Activated CD4-positive, alpha-beta T cell treated with anti-CD3 and anti-CD28 coated beads for 36 hours (primary cell): ENCODE measurements at regions of chr2 and their contacts with region 1.

Region 1: DNA sequence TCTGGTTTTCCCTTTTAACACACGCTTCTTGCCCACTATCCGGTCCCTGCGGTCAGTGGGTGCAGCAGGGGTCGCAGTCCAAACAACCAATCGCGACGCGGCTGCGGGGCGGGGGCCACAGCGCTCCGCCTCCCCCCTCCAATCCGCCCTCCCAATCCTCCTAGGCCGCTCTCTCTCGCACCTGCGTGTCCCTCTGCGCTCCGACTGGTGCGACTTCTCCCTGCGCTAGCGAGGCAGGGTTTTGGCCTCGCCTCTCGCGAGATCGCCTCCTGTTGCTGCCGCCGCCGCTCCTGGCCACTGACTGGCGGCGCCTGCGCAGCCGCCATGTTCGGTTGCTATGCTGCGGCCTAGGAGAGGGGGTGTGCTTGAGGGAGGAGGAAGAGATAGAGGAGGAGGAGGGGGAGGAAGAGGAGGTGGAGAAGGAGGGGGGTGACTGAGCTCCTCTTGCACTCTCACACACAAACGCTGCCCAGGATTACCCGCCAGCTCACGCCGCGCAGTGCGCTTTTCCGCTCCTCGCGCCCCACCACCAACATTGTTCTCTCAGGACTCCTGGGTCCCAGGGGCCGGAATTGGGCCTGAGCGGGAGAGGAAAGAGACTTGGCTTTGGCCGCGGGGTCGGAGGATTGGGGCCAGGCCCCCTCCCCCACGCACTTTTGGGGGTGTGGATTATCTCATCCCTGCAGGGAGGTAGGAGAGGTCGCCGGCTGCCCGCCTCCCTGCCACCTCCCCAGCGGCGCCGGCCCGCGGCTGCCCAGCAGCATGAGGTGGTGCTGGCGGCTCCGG is at the start of gene PTPN4:
- DNase-seq: peak; percentile 98
- ATAC-seq: peak; percentile 93
- H3K4me3 Mint-ChIP-seq: peak within 1 kb of the TSS; percentile 72
- H3K27ac Mint-ChIP-seq: peak within 1 kb of the TSS; percentile 93
- H3K4me1 Mint-ChIP-seq: peaks cover 43% of the 10 kb centered on the region
- H3K27me3 Mint-ChIP-seq: no peaks in the 10 kb centered on the region
- total RNA-seq, gene PTPN4: 32.4 to 38.0 TPM

Region 2: GRCh38 chr2:119702918-119703401 is 56.7 kb before region 1 on chr2:
- CTCF ChIA-PET with region 1: interaction called, 10 read pairs
- POLR2A ChIA-PET with region 1: no interaction called
- intact Hi-C with region 1: loop called (anchors 1 to 5 kb)
- DNase-seq: peak; percentile 82
- ATAC-seq: peak; percentile 81
- H3K4me3 Mint-ChIP-seq: no peak overlapping the region
- H3K27ac Mint-ChIP-seq: no peak overlapping the region
- H3K4me1 Mint-ChIP-seq: peaks cover 21% of the 10 kb centered on the region
- H3K27me3 Mint-ChIP-seq: no peaks in the 10 kb centered on the region

Region 3: GRCh38 chr2:119730671-119731193 is 28.9 kb before region 1 on chr2:
- CTCF ChIA-PET with region 1: no interaction called
- POLR2A ChIA-PET with region 1: no interaction called
- intact Hi-C with region 1: no loop called
- DNase-seq: no peak
- ATAC-seq: no peak
- H3K4me3 Mint-ChIP-seq: no peak overlapping the region
- H3K27ac Mint-ChIP-seq: no peak overlapping the region
- H3K4me1 Mint-ChIP-seq: no peaks in the 10 kb centered on the region
- H3K27me3 Mint-ChIP-seq: no peaks in the 10 kb centered on the region

Region 4: GRCh38 chr2:119929537-119929936 is 169.9 kb after region 1 on chr2:
- CTCF ChIA-PET with region 1: no interaction called
- POLR2A ChIA-PET with region 1: no interaction called
- intact Hi-C with region 1: loop called (anchors 5 to 10 kb)
- DNase-seq: peak; percentile 10
- ATAC-seq: peak; percentile 79
- H3K4me3 Mint-ChIP-seq: peak overlapping the region; percentile 35
- H3K27ac Mint-ChIP-seq: peak overlapping the region; percentile 42
- H3K4me1 Mint-ChIP-seq: peaks cover 54% of the 10 kb centered on the region
- H3K27me3 Mint-ChIP-seq: no peaks in the 10 kb centered on the region

Region 5: GRCh38 chr2:120223034-120223912 is 463.6 kb after region 1 on chr2 and contains the start of gene TMEM185B:
- CTCF ChIA-PET with region 1: no interaction called
- POLR2A ChIA-PET with region 1: interaction called, 5 read pairs
- intact Hi-C with region 1: loop called in 1 of 2 experiments (anchors 1 kb)
- DNase-seq: peak; percentile 95
- ATAC-seq: peak; percentile 90
- H3K4me3 Mint-ChIP-seq: peak within 1 kb of the TSS; percentile 76
- H3K27ac Mint-ChIP-seq: peak within 1 kb of the TSS; percentile 93
- H3K4me1 Mint-ChIP-seq: peaks cover 50% of the 10 kb centered on the region
- H3K27me3 Mint-ChIP-seq: no peaks in the 10 kb centered on the region
- total RNA-seq, gene TMEM185B: 15.9 to 17.3 TPM

Region 6: GRCh38 chr2:120343433-120344105 is 583.9 kb after region 1 on chr2:
- CTCF ChIA-PET with region 1: no interaction called
- POLR2A ChIA-PET with region 1: no interaction called
- intact Hi-C with region 1: loop called in 1 of 2 experiments (anchors 10 kb)
- DNase-seq: peak; percentile 84
- ATAC-seq: peak; percentile 71
- H3K4me3 Mint-ChIP-seq: peak overlapping the region; percentile 21
- H3K27ac Mint-ChIP-seq: no peak overlapping the region
- H3K4me1 Mint-ChIP-seq: peaks cover 22% of the 10 kb centered on the region
- H3K27me3 Mint-ChIP-seq: peaks cover 48% of the 10 kb centered on the region